Activated T-helper 1 cell treated with anti-CD3 and anti-CD28 coated beads, Interleukin-12 subunit alpha, Interleukin-12 subunit beta, Interleukin-2, Interleukin-4 antibody, amounts not matched to agents 30 ng/mL and 10 ng/mL and 1 ng/mL, durations not matched to agents 14 hours and 24 hours and 36 hours (primary cell): ENCODE measurements at regions of chr3 and their contacts with region 1.

Region 1: DNA sequence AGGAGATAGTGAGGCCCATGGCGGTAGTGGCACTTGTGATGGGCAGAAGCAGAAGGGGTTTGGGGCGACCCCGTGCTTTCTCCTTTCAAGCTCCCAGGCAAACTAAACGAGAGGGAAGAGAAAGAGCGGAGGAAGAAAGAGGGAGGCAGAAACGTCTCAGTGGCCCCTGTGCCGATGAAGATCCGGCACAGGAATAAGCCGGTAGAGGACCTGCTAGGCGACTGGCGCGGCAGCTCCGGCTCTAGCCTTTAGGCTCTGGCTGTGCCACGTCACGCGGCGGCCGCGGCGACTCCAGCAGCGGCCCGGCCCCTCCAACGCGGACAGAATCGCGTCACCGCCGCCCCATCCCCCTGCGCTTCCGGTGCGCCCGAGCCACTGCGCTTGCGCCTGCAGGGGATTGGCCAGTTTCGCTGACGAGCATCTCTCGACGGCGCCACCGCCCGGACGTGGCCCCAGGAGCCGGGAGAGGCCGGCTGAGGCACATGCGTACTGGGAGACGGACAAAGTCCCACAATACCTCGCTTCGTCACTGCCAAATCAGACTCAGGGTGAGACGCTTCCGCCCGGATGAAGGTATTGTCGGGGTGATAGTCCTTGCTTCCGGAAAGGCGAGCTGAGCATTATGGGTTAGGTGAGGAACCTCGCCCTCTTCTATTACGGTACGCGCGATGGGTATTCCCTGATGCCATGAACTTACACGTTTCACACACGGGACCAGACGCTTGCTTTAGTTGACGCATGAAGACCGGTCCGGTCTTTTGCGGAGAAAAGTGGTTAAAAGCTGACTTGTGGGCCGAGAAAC is at the start of gene ARF4:
- DNase-seq: peak; percentile 100
- H3K4me3 Mint-ChIP-seq: peak within 1 kb of the TSS; percentile 98
- H3K27ac Mint-ChIP-seq: peak within 1 kb of the TSS; percentile 100
- H3K4me1 Mint-ChIP-seq: peaks cover 40% of the 10 kb centered on the region
- H3K27me3 Mint-ChIP-seq: no peaks in the 10 kb centered on the region
- total RNA-seq, gene ARF4: 93.2 and 97.0 TPM in 2 replicates

Region 2: DNA sequence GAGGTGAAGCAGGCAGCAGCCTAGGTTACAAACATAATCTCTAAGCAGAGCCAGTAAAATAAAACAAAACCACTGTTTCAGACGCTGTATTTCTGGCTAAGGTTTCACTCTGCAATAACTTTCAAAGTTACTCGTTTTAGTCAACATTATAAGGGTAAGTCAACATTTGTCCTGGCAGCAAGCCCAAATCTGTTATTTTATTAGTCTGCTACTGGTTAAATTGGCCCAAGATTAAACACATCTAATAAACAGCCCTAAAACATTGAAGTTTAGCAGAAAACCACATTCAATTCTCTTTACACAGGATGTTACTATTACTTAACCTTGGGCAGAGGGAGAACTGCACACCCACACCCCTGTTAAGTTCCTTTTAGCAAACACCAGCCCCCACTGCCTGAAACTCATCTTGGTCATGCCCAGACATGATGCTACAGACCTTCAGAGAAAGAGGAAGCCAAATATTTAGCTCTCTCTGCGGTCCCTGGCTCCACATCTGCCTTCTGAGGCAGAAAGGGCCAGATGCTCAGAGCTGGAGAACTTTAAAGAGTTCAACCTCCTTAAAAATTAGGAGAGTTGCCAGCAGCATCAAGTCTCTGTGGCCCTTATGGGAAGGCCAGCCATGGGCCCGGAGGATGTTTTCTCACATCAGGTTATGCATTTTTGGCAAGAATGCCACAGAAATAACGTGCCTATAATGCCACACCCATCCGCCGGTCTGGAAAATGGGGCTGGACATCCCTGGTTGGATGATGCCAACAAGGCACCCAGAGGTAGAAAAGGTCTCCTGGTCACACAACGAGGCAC is 813.5 kb before region 1 on chr3:
- intact Hi-C with region 1: loop called (anchors 10 kb)
- DNase-seq: peak; percentile 72
- H3K4me3 Mint-ChIP-seq: peak overlapping the region; percentile 81
- H3K27ac Mint-ChIP-seq: peak overlapping the region; percentile 95
- H3K4me1 Mint-ChIP-seq: peaks cover 97% of the 10 kb centered on the region
- H3K27me3 Mint-ChIP-seq: no peaks in the 10 kb centered on the region

Region 3: DNA sequence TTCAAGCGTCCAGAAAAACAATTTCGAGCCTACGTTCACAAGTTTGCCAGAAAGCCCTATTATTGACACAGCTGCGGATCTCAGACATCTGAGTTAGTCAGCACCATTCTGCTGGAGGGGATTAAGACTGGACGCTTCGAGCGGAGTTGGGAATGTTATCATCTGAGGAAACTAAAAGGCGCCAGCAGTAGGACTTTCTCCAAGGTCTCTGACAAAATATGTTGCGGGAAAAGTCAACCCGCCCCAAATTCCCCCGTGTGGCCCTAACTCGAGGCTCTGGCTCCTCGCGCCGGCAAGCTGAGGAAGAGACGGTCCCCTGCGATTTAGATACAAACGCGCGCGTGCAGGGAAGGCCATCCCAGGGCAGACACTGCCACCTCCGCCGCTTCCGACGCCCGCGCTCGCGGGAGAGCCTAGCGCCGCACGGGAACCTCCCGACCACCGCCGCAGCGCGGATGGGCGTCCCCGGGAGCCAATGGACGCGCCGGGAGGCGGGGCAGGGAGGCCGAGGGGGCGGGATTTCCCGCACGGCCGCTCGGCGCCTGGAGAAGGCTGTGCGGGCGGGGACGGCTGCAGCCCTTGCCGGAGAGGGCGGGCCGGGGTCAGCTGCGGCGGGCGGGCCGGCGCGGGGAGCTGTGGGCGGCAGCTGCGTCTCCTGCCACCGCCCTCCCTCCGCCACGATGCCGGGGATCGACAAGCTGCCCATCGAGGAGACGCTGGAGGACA is 370.0 kb before region 1 on chr3 and contains the start of gene APPL1:
- intact Hi-C with region 1: loop called (anchors 1 kb)
- DNase-seq: peak; percentile 92
- H3K4me3 Mint-ChIP-seq: peak within 1 kb of the TSS; percentile 93
- H3K27ac Mint-ChIP-seq: peak within 1 kb of the TSS; percentile 82
- H3K4me1 Mint-ChIP-seq: peaks cover 42% of the 10 kb centered on the region
- H3K27me3 Mint-ChIP-seq: peaks cover 8% of the 10 kb centered on the region
- total RNA-seq, gene APPL1: 39.9 and 46.0 TPM in 2 replicates

Region 4: GRCh38 chr3:57675530-57675929 is 78.2 kb after region 1 on chr3:
- intact Hi-C with region 1: loop called (anchors 2 kb)
- DNase-seq: no peak
- H3K4me3 Mint-ChIP-seq: no peak overlapping the region
- H3K27ac Mint-ChIP-seq: no peak overlapping the region
- H3K4me1 Mint-ChIP-seq: peaks cover 48% of the 10 kb centered on the region
- H3K27me3 Mint-ChIP-seq: no peaks in the 10 kb centered on the region

Region 5: GRCh38 chr3:57852896-57853295 is 255.6 kb after region 1 on chr3:
- intact Hi-C with region 1: loop called (anchors 5 kb)
- DNase-seq: no peak
- H3K4me3 Mint-ChIP-seq: no peak overlapping the region
- H3K27ac Mint-ChIP-seq: no peak overlapping the region
- H3K4me1 Mint-ChIP-seq: no peaks in the 10 kb centered on the region
- H3K27me3 Mint-ChIP-seq: no peaks in the 10 kb centered on the region

Region 6: DNA sequence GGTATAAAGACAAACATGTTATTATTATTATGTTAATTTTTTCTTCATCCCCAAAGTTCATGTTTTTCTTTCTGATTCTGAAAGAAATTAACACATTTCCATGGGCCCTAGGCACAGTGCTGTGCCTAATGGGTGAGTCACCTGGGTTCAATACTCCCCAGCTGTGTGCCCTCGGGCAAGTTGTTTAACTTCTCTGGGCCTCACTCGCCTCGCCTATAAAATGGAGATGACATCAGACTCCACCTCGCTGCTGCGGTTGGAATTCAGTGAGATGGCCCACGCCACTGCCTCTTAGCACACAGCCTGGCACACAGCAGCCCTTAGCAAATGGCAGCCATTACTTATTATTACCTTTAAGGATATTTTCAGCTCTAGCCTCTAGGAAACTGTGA is 590.8 kb after region 1 on chr3:
- intact Hi-C with region 1: no loop called
- DNase-seq: no peak
- H3K4me3 Mint-ChIP-seq: no peak overlapping the region
- H3K27ac Mint-ChIP-seq: no peak overlapping the region
- H3K4me1 Mint-ChIP-seq: no peaks in the 10 kb centered on the region
- H3K27me3 Mint-ChIP-seq: no peaks in the 10 kb centered on the region

Region 7: GRCh38 chr3:58433400-58434169 is 836.3 kb after region 1 on chr3 and contains the start of gene PDHB:
- intact Hi-C with region 1: loop called (anchors 2 kb)
- DNase-seq: peak; percentile 89
- H3K4me3 Mint-ChIP-seq: peak within 1 kb of the TSS; percentile 88
- H3K27ac Mint-ChIP-seq: peak within 1 kb of the TSS; percentile 91
- H3K4me1 Mint-ChIP-seq: peaks cover 29% of the 10 kb centered on the region
- H3K27me3 Mint-ChIP-seq: no peaks in the 10 kb centered on the region
- total RNA-seq, gene PDHB: 62.0 and 68.1 TPM in 2 replicates